ENCODE measurements at regions of chr12 and their contacts with region 1.

Region 1: GRCh38 chr12:105523164-105524015 is 192.9 kb downstream of the C12orf75 start:
- DNase-seq: peak; percentile 86
- ATAC-seq: peak; percentile 92
- H3K4me3 ChIP-seq: no peak overlapping the region
- H3K27ac ChIP-seq: no peak overlapping the region
- H3K4me1 ChIP-seq: peaks cover 6% of the 10 kb centered on the region
- H3K27me3 ChIP-seq: no peaks in the 10 kb centered on the region
- CTCF ChIP-seq: no peak
- POLR2A ChIP-seq: no peak
- RAD21 ChIP-seq: peak; percentile 2; the same call in 1 of the 2 replicates

Region 2: DNA sequence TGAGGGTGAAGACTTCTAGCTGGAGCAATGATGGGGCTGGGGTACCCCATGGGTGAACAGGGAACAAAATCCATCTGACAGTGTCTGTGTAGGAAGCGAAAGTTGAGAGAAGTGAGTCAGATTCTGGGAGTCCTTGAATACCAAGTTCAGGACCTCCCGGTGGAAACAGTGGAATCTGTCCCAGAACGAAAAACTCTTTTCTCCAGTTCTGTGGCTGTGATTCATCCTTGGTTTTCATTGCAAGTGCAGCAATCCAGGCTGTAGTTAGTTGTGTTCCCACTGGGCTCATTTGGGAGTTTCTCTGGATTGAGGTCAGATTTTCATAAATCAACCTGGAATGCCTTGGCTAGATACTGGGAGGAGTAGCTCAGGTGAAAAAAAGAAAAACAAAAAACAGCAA is 72.2 kb before region 1 on chr12:
- CTCF ChIA-PET with region 1: no interaction called
- POLR2A ChIA-PET with region 1: no interaction called
- dilution Hi-C with region 1: no loop called
- in situ Hi-C with region 1: no loop called
- intact Hi-C with region 1: no loop called
- DNase-seq: peak; percentile 82
- ATAC-seq: peak; percentile 68
- H3K4me3 ChIP-seq: no peak overlapping the region
- H3K27ac ChIP-seq: no peak overlapping the region
- H3K4me1 ChIP-seq: peaks cover 2% of the 10 kb centered on the region
- H3K27me3 ChIP-seq: no peaks in the 10 kb centered on the region; the same call in 1 of the 2 replicates
- CTCF ChIP-seq: no peak
- POLR2A ChIP-seq: no peak
- RAD21 ChIP-seq: no peak

Region 3: GRCh38 chr12:105461271-105461943 is 62.0 kb before region 1 on chr12:
- CTCF ChIA-PET with region 1: no interaction called
- POLR2A ChIA-PET with region 1: interaction called, 33 read pairs
- dilution Hi-C with region 1: no loop called
- in situ Hi-C with region 1: no loop called
- intact Hi-C with region 1: no loop called
- DNase-seq: no peak
- ATAC-seq: no peak
- H3K4me3 ChIP-seq: no peak overlapping the region
- H3K27ac ChIP-seq: no peak overlapping the region
- H3K4me1 ChIP-seq: no peaks in the 10 kb centered on the region
- H3K27me3 ChIP-seq: peaks cover 9% of the 10 kb centered on the region
- CTCF ChIP-seq: no peak
- POLR2A ChIP-seq: no peak
- RAD21 ChIP-seq: no peak

Region 4: DNA sequence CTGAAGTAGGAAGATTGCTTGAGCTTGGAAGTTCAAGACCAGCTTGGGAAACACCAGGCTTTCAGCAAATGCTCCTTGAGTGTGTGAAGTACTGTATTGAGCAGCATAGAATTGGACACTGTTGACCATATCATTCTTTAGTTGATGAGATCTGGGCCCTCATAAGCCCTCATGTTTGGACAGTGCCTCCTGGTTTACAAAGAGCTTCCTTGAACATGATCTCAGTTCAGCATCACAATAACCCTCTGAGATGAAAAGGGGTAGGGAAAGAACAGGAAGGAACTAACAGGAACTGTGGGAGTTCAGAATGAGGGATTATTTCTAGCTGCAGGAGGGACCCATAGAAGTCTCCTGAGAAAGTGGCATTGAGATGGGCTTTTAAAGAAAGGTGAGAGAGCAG is 39.7 kb before region 1 on chr12:
- CTCF ChIA-PET with region 1: no interaction called
- POLR2A ChIA-PET with region 1: no interaction called
- dilution Hi-C with region 1: no loop called
- in situ Hi-C with region 1: no loop called
- intact Hi-C with region 1: no loop called
- DNase-seq: no peak
- ATAC-seq: no peak
- H3K4me3 ChIP-seq: no peak overlapping the region
- H3K27ac ChIP-seq: no peak overlapping the region
- H3K4me1 ChIP-seq: peaks cover 5% of the 10 kb centered on the region; the same call in 1 of the 2 replicates
- H3K27me3 ChIP-seq: no peaks in the 10 kb centered on the region
- CTCF ChIP-seq: no peak
- POLR2A ChIP-seq: no peak
- RAD21 ChIP-seq: no peak